HCT116 (cell line): ENCODE measurements at regions of chr1 and their contacts with region 1.

Region 1: GRCh38 chr1:29793101-29793546 is 556.8 kb downstream of the PTPRU start:
- DNase-seq: peak; percentile 61
- ATAC-seq: peak; percentile 94
- H3K4me3 ChIP-seq: no peak overlapping the region
- H3K27ac ChIP-seq: no peak overlapping the region
- H3K4me1 ChIP-seq: peaks cover 0 to 11% of the 10 kb centered on the region in 2 experiments; a peak in 2 of 4 replicates
- H3K27me3 ChIP-seq: no peaks in the 10 kb centered on the region
- CTCF ChIP-seq: peak; percentile 85 to 92 (median 90)
- POLR2A ChIP-seq: no peak
- RAD21 ChIP-seq: peak; percentile 91

Region 2: GRCh38 chr1:29849038-29849750 is 56.1 kb after region 1 on chr1:
- CTCF ChIA-PET with region 1: interaction called, 14 read pairs
- POLR2A ChIA-PET with region 1: no interaction called
- RAD21 ChIA-PET with region 1: interaction called, 4 read pairs
- intact Hi-C with region 1: loop called (anchors 1 kb)
- DNase-seq: no peak
- ATAC-seq: peak; percentile 96
- H3K4me3 ChIP-seq: no peak overlapping the region
- H3K27ac ChIP-seq: no peak overlapping the region
- H3K4me1 ChIP-seq: peaks cover 0 to 5% of the 10 kb centered on the region in 2 experiments; a peak in 3 of 4 replicates
- H3K27me3 ChIP-seq: peaks cover 8% of the 10 kb centered on the region; the same call in 1 of the 2 replicates
- CTCF ChIP-seq: peak; percentile 65 to 91 (median 72)
- POLR2A ChIP-seq: no peak
- RAD21 ChIP-seq: peak; percentile 82